HEK293 (cell line): ENCODE measurements at regions of chr20 and their contacts with region 1.

Region 1: DNA sequence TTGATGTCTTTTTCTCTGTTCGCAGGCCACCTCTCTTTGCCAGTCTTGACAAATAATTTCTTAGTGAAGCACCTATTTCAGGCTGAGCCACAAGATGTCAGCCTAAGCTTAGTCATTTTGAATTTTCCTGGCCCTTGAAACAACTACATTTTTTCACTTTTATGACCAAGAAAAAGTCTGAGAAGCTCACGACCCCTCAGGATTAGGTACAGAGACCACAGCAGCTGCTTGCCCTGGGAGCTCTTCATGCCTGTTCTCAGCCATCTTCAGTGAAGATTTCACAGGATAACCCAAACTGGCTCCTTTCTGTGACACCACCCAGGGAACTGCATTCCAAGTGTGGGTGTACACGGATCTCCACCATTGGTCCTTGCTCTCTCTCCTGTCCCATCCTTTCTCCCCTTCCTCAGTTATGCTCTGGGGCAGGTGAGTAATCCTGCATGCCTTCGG is 38.4 kb upstream of the SPTLC3 start:
- H3K4me3 ChIP-seq: no peak overlapping the region
- H3K27ac ChIP-seq: no peak overlapping the region
- H3K4me1 ChIP-seq: no peaks in the 10 kb centered on the region
- CTCF ChIP-seq: 0 out of 2 replicates have a peak, but pooled peaks have one; percentile 14

Region 2: DNA sequence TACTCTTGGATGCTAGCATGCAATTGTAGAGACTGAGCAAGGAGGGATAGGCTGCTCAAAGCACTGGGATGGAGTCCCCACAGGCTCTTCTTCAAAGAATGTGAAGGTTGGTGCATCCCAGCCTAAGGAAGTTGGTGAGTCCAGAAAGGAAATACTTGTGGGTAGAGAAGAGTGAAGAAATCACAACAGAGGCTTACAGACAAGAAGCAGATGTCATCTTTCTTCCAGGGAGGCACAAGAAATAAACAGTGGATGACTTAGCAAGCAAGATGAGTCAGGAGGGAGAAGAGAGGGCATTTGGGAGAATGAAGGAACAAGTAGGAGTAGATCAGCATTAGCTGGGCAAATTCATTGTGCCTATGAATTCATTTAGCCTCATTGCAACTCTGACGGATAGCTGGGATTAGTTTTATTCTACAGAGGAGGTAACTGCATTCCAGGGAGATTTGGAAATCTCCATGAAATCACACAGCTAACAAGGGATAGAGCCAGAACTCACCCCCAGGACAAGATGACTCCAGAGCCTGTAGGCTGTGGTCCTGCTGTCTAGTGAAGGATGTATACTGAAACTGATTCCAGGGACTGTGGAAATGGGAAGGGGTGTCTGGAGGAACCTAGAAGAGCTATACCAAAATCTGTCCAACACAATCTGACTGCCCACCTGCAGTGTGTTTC is 87.4 kb before region 1 on chr20:
- CTCF ChIA-PET with region 1: no interaction called
- POLR2A ChIA-PET with region 1: no interaction called
- H3K4me3 ChIP-seq: no peak overlapping the region
- H3K27ac ChIP-seq: no peak overlapping the region
- H3K4me1 ChIP-seq: no peaks in the 10 kb centered on the region
- CTCF ChIP-seq: no peak

Region 3: DNA sequence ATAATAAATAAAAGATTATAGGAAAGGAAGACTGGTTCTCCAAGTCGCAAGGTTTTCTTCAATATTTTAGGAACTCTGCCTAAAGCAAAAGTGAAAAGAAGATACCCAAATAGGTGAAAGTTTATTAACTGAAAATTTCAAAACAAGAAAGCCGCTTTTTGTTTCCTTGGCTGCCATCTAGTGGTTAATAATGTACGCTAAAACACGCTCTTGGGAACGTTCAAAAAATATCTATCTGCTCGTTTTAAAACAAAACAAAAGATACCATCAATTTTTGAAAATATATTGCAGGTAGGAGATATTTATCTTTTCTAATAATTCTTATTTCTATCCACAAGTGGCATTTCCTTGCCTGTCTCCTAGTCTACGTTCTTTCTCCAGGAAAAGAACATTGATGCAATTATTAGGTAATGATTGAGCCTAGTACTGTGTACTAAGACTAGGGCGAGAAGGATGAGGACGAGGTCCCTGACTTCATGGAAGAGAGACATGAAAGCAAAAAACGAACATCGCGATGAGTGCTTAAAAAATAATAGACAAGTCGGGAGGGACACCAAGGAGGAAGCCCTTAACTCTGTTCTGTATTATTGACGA is 135.6 kb after region 1 on chr20:
- CTCF ChIA-PET with region 1: interaction called, 42 read pairs
- POLR2A ChIA-PET with region 1: no interaction called
- H3K4me3 ChIP-seq: no peak overlapping the region
- H3K27ac ChIP-seq: no peak overlapping the region
- H3K4me1 ChIP-seq: no peaks in the 10 kb centered on the region
- CTCF ChIP-seq: no peak

Region 4: GRCh38 chr20:13251106-13251903 is 280.9 kb after region 1 on chr20:
- CTCF ChIA-PET with region 1: no interaction called
- POLR2A ChIA-PET with region 1: no interaction called
- H3K4me3 ChIP-seq: no peak overlapping the region
- H3K27ac ChIP-seq: no peak overlapping the region
- H3K4me1 ChIP-seq: no peaks in the 10 kb centered on the region
- CTCF ChIP-seq: no peak